ENCODE measurements at regions of chr1 and their contacts with region 1.

Region 1: GRCh38 chr1:183471743-183472487 is 384 bp upstream of the SMG7 start:
- DNase-seq: peak; percentile 92
- H3K4me3 Mint-ChIP-seq: peak overlapping the region; percentile 87
- H3K27ac Mint-ChIP-seq: peak overlapping the region; percentile 99
- H3K4me1 Mint-ChIP-seq: peaks cover 24% of the 10 kb centered on the region
- H3K27me3 Mint-ChIP-seq: no peaks in the 10 kb centered on the region

Region 2: GRCh38 chr1:182629499-182630096 is 842.3 kb before region 1 on chr1:
- intact Hi-C with region 1: loop called (anchors 10 kb)
- DNase-seq: peak; percentile 16
- H3K4me3 Mint-ChIP-seq: no peak overlapping the region
- H3K27ac Mint-ChIP-seq: peak overlapping the region; percentile 56
- H3K4me1 Mint-ChIP-seq: peaks cover 61% of the 10 kb centered on the region
- H3K27me3 Mint-ChIP-seq: peaks cover 21% of the 10 kb centered on the region

Region 3: GRCh38 chr1:183514235-183514634 is 42.3 kb after region 1 on chr1:
- intact Hi-C with region 1: loop called (anchors 5 kb)
- DNase-seq: no peak
- H3K4me3 Mint-ChIP-seq: no peak overlapping the region
- H3K27ac Mint-ChIP-seq: no peak overlapping the region
- H3K4me1 Mint-ChIP-seq: peaks cover 27% of the 10 kb centered on the region
- H3K27me3 Mint-ChIP-seq: no peaks in the 10 kb centered on the region

Region 4: DNA sequence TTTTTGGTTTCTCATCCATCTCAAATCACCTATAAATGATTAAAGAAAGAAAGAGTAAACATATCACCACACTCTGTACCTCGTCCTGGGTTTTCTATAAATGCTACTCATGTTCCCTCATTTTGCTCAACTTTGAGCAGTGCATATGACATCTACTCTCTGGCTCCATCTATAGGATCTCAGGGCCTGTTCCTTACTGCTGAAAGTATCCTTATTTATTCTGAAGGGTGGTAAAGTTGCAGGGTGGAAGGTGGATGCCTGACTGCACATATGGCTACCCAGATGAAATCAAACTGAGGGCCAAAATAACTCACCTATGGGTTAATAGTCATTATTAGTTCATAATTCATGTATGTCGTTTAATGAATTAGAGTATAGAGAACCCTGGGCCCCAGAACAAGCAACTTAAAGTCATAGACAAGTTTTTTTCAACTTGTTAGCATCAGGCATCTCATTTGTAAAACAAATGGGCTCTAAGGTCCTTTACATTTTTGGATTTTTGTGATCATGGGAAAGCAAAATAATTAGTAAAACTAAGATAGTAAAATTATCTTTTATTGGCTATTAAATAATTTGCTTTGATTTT is 71.8 kb after region 1 on chr1:
- intact Hi-C with region 1: loop called (anchors 1 kb)
- DNase-seq: no peak
- H3K4me3 Mint-ChIP-seq: no peak overlapping the region
- H3K27ac Mint-ChIP-seq: no peak overlapping the region
- H3K4me1 Mint-ChIP-seq: peaks cover 4% of the 10 kb centered on the region
- H3K27me3 Mint-ChIP-seq: no peaks in the 10 kb centered on the region

Measured in activated T-helper 2 cell treated with anti-CD3 and anti-CD28 coated beads, Interferon-gamma antibody, Interleukin-2, Interleukin-4, amounts not matched to agents 10 μg/mL and 5 μg/mL and 100 μg/mL, durations not matched to agents 14 hours and 24 hours and 36 hours (primary cell).